ENCODE measurements at regions of chr1 and their contacts with region 1.

Region 1: DNA sequence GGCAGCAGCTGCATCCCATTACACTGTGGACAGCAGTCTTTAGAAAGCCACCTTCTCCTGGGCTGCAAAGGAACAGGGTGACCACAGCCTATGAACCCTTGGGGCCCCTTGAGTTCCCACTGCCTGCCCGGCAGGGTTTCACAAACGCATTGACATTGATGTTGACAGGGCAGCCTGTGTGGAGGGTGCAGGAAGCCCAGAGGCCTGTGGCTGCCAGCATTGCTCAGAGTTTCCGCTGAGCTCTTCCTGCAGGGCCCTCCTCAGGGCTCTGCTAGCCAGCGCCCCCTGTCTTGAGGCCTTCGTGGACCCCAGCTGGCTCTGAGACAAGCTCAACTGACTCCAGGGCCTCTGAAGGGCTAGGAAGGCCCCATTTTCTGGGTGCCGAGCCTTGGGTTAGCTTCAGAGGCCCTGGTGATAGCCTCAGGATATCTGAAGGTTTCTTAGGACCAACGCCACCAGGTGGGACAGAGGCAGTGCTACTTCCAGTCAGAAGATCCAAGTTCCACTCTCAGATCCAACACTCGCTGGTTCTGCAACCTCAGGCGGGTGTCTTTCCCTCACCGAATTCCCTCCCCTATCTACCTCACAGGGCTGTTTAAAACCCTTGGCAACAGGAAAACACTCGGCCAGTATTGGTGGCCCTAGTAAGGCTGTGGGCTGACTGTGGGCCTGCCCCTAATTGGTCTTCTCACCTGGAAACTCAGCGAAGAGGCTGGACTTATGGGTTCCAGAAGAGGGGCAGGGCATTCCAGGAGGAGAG is 27.2 kb upstream of the EPS8L3 start:
- DNase-seq: peak; percentile 83
- H3K4me3 Mint-ChIP-seq: no peak overlapping the region
- H3K27ac Mint-ChIP-seq: peak overlapping the region; percentile 94
- H3K4me1 Mint-ChIP-seq: peaks cover 83% of the 10 kb centered on the region
- H3K27me3 Mint-ChIP-seq: no peaks in the 10 kb centered on the region

Region 2: GRCh38 chr1:109802901-109803561 is 12.1 kb after region 1 on chr1:
- CTCF ChIA-PET with region 1: interaction called, 95 read pairs
- POLR2A ChIA-PET with region 1: interaction called, 4 read pairs
- DNase-seq: no peak
- H3K4me3 Mint-ChIP-seq: peak overlapping the region; percentile 52
- H3K27ac Mint-ChIP-seq: peak overlapping the region; percentile 98
- H3K4me1 Mint-ChIP-seq: peaks cover 86% of the 10 kb centered on the region
- H3K27me3 Mint-ChIP-seq: no peaks in the 10 kb centered on the region

Region 3: DNA sequence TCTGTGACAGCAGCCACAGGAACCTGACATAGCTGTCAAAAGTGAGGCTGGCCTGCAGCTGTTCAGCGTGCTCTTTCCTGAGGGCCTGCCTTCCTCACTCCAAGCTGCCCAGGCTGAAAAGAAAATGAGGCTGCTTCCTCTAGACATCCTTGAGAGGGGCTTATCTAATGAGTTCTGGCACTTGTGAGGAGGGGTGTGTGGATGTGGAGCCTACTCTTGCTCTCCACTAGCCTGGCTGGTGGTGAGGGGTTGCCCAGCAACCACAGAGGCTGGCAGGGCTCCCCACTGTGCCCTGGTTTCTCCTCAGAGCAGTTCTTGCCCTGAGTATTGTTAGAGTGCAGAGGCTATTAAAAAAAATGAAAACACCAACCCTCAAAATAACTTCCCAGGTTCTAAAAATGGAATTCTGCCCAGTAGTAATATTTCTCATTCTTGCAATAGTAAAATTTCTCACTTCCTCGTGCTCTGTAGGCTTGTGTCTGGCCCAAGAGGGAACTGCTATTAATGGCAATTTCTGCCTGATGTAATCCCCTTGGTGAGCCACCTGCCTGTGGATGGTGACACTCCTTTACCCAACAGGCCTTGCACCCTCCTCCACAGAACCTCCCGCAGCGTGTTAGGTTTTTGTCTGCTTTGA is 25.4 kb after region 1 on chr1:
- CTCF ChIA-PET with region 1: interaction called, 16 read pairs
- POLR2A ChIA-PET with region 1: no interaction called
- DNase-seq: no peak
- H3K4me3 Mint-ChIP-seq: no peak overlapping the region
- H3K27ac Mint-ChIP-seq: no peak overlapping the region
- H3K4me1 Mint-ChIP-seq: peaks cover 19% of the 10 kb centered on the region
- H3K27me3 Mint-ChIP-seq: peaks cover 3% of the 10 kb centered on the region

Region 4: DNA sequence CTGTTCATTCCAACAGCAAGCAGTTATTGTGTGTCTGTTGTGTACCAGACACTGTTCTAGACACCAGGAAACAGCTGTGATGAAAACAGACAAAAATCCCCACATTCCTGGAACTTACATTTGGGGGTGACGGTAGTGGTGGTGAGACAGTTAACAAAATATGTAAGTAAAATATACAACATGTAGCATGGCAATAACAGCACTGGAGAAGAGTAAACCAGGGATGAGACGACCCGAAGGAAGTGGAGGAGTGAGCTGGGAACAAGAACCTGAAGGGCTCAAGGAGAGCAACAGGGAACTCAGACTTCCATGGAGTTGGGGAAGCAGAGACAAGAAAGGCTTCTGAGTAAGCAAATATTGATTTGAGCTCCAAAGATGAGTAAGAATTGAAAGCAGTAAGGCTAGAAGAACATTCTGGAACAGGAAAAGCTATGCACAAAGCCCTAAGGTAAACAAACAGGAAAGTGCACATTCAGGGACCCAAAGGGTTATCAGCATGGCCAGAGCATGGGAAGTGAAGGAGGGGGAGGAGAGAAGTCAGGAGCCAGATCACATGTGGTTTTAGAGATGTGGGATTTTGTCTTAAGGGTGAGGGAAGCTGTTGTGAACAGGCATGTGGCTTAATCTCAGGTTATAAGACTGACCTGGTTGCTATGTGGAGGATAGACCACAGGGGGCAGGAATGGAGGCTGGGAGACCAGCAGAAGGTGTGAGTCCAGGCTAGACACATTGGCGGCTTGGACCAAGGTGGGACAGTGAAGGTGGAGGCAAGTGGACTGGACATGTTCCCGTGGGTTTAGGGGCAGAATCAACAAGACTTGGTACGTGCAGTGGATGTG is 127.1 kb after region 1 on chr1:
- CTCF ChIA-PET with region 1: interaction called, 17 read pairs
- POLR2A ChIA-PET with region 1: interaction called, 3 read pairs
- DNase-seq: no peak
- H3K4me3 Mint-ChIP-seq: no peak overlapping the region
- H3K27ac Mint-ChIP-seq: no peak overlapping the region
- H3K4me1 Mint-ChIP-seq: peaks cover 15% of the 10 kb centered on the region
- H3K27me3 Mint-ChIP-seq: no peaks in the 10 kb centered on the region